Colonic mucosa (tissue), 4 donors: ENCODE measurements at regions of chr22 and their contacts with region 1.

Region 1: DNA sequence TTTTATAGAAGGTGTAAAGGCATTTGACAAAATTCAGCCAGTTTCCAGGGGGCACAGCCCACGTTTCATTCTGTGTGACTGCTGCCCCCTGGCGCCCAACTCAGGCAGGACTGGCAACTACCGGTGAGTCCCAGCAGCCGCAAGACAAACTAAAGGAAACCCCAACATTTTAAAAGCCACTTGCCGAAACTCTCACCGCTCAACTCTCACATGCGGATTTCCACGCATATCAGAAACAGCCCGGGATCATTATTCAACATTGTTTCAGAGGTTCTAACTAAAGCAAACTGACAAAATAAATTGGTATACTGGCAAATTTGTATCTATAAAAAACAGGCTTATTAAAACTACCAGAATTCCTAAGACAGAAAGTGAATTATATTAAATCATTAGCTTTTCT is 48.2 kb downstream of the MORC2 start:
- DNase-seq: peak; percentile 84
- H3K4me3 ChIP-seq: no peak overlapping the region
- H3K27ac ChIP-seq: no peak overlapping the region
- H3K4me1 ChIP-seq: no peaks in the 10 kb centered on the region
- H3K27me3 ChIP-seq: no peaks in the 10 kb centered on the region
- CTCF ChIP-seq: peak; percentile 87

Region 2: DNA sequence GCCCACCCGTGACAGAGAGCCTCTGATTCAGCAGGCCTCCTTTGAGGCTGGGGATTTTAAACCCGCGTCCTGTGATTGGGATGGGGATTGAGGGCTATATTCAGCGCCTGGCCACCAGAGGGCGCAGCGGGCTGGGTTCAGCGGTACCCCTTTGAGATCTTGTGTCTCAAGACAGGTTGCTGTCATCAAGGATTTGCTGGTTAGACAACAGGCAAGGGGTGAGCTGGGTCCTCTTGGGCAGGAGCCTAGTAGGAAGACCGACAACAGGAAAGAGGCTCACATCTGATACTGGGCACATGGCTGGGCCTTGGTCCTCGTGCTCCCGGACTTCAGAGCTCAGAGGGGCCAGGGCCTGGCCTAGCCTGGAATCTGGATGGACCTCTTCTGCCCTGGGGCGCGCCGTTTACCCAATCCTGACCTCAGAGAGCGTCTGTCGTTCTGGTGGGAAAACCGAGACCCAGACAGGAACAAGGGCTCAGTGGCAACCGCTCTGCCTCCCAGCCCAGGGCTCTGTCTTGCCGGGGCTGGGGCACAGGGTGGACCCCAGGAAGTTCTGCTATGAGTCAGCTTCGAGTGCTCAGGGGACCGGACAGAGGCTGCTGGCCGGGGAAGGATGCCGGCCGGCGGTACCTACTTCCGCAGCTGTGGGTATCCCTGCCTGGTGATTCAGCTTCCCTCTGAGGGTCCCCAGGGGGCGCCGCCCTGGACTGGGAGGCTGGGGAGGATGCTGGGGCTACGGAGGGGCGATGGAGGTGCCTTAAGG is 285.8 kb before region 1 on chr22:
- intact Hi-C with region 1: loop called (anchors 10 kb)
- DNase-seq: peak; percentile 93
- H3K4me3 ChIP-seq: peak overlapping the region; percentile 72
- H3K27ac ChIP-seq: peak overlapping the region; percentile 84
- H3K4me1 ChIP-seq: peaks cover 15% of the 10 kb centered on the region
- H3K27me3 ChIP-seq: no peaks in the 10 kb centered on the region
- CTCF ChIP-seq: peak; percentile 90

Region 3: DNA sequence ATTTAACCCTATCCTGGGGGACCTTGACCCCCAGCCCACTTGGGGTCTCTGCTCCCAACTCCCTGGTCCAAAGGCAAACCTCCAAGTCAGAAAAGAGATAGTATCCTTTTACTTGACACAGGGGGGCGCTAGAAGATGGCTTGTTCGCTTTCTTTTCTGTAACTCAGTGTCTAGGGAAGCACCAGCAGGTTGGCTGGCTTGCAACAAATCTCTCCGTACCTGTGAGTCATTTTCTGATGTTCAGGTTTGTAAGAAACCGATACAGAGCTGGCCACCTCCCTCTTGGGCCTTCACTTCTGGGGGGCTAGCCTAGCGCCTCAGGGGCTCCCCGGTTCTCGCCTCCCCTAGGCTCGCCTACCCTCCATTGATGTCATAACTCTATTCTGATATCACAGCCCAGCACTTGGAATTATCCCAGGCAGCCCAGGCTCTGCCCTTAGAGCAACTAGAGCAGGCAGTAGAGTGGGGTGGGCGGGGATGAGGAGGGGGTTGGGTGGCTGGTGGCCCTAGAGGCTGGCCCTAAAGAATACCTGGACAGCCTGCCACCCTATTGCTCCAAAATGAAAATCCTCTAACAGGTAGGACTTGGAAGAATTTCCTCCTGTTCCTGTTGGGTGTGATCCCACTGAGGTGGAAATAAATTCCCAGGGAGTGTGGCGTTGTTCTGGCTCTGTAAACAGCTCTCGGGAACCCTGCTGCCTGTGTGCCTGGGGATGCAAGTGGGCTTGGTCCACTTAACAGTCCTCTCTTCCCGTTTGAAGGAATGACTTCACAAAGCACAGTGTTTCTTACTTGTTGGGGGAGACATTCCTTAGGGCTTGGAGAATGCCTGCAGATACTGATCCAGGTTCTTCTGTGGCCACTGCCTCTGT is 156.4 kb before region 1 on chr22:
- intact Hi-C with region 1: loop called (anchors 5 kb)
- DNase-seq: peak; percentile 56
- H3K4me3 ChIP-seq: no peak overlapping the region
- H3K27ac ChIP-seq: no peak overlapping the region
- H3K4me1 ChIP-seq: no peaks in the 10 kb centered on the region
- H3K27me3 ChIP-seq: no peaks in the 10 kb centered on the region
- CTCF ChIP-seq: peak; percentile 51